Sigmoid colon (tissue), 7 donors: ENCODE measurements at regions of chr12 and their contacts with region 1.

Region 1: GRCh38 chr12:21438643-21439042 is 1.2 kb downstream of the PYROXD1 start:
- DNase-seq: no peak
- H3K4me3 ChIP-seq: peak overlapping the region; percentile 63 to 69 (median 64)
- H3K27ac ChIP-seq: peak overlapping the region in 3 of 4 donors; percentile 83 to 85 (median 84)
- H3K4me1 ChIP-seq: peaks cover 0 to 16% (median 7%) of the 10 kb centered on the region in 4 donors
- H3K27me3 ChIP-seq: no peaks in the 10 kb centered on the region
- CTCF ChIP-seq: no peak
- EP300 ChIP-seq: no peak
- POLR2A ChIP-seq: no peak

Region 2: DNA sequence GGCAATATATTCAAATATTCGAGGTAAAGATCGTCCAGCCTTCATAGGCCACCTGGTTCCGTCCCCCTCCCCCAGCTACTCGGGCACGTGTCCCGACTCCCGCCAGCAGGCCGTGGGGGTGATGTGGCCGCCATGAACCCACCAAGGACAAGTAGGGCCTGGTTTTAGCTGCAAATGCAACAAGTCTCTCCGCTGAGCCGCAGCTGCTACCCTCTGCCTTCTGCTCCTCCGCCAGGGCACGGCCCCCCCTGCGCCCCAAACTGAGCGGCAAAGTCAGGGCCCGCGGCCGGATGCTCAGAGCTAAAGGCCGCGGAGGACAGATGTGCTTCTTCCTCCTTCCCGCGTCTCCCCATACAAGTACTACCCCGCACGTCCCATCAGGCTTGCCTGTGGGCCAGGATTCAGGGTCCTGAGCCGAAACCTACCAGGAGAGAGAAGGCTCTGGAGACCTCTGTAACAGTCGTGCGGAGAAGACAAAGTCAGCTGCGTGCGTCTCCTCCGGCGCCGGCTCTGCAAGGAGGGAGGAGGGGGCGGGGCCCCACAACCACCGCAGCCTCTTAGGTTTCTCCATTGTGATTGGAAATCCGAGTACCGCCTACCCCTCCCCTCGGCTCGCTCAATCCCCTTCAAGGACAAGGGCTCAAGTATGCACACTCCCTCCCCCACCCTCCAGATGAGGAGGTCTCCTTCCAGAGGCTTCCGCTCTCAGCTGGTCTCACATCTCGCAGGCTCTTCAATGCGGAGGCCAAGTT is 218.9 kb after region 1 on chr12 and contains the start of gene LDHB:
- intact Hi-C with region 1: loop called (anchors 10 kb)
- DNase-seq: peak; percentile 99
- H3K4me3 ChIP-seq: peak within 1 kb of the TSS; percentile 69 to 88 (median 78)
- H3K27ac ChIP-seq: peak within 1 kb of the TSS; percentile 94 to 97 (median 95)
- H3K4me1 ChIP-seq: peaks cover 0 to 36% (median 9%) of the 10 kb centered on the region in 4 donors
- H3K27me3 ChIP-seq: no peaks in the 10 kb centered on the region
- CTCF ChIP-seq: no peak
- EP300 ChIP-seq: no peak
- POLR2A ChIP-seq: peak; percentile 97 to 98
- total RNA-seq, gene LDHB: 355 to 424 (median 379) TPM